ENCODE measurements at regions of chr11 and their contacts with region 1.

Region 1: GRCh38 chr11:64448599-64449556 is 89.9 kb downstream of the RPS6KA4 start:
- H3K4me3 ChIP-seq: peak overlapping the region; percentile 33
- H3K27ac ChIP-seq: no peak overlapping the region
- H3K4me1 ChIP-seq: peaks cover 3% of the 10 kb centered on the region; the same call in 1 of the 2 replicates
- CTCF ChIP-seq: peak; percentile 93

Region 2: GRCh38 chr11:63882555-63883242 is 566.2 kb before region 1 on chr11:
- CTCF ChIA-PET with region 1: no interaction called
- POLR2A ChIA-PET with region 1: no interaction called
- H3K4me3 ChIP-seq: no peak overlapping the region
- H3K27ac ChIP-seq: no peak overlapping the region
- H3K4me1 ChIP-seq: no peaks in the 10 kb centered on the region
- CTCF ChIP-seq: no peak

Region 3: DNA sequence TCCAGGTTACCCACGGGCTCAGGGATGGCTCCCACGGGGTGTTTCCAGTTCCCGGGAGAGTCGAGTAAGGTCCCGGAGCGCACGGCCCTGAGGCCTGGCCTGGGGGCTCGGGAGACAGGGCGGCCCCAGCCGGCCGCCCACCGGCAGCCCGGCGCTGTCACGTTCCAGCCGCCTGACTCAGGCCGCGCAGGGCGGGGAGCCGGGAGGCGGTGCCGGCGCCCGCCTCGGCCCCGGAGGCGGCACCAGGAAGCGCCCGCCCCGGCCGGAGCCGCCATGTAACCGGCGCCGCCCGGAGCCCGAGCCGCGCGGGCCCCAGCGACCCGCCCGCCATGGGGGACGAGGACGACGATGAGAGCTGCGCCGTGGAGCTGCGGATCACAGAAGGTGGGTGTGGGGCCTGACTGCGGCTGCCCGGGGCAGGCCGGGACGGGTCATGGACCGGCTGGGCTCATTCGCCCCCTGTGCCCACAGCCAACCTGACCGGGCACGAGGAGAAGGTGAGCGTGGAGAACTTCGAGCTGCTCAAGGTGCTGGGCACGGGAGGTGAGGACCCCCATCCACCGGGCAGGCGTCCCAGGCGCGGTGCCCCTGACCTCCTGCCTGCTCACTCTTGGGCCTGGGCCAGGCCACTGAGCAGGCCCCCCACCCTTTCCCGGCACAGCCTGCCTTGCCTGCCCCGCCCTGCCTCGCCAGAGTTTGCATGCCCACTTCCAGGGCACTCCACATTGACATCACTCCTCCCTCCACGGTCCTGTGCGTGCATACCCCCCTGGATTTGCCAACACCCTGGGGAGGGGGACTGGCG is 89.8 kb before region 1 on chr11 and contains the start of gene RPS6KA4:
- CTCF ChIA-PET with region 1: interaction called, 63 read pairs
- POLR2A ChIA-PET with region 1: interaction called, 3 read pairs
- H3K4me3 ChIP-seq: peak within 1 kb of the TSS; percentile 83
- H3K27ac ChIP-seq: peak within 1 kb of the TSS; percentile 75; the same call in 1 of the 2 replicates
- H3K4me1 ChIP-seq: no peaks in the 10 kb centered on the region; the same call in 1 of the 2 replicates
- CTCF ChIP-seq: no peak

Region 4: DNA sequence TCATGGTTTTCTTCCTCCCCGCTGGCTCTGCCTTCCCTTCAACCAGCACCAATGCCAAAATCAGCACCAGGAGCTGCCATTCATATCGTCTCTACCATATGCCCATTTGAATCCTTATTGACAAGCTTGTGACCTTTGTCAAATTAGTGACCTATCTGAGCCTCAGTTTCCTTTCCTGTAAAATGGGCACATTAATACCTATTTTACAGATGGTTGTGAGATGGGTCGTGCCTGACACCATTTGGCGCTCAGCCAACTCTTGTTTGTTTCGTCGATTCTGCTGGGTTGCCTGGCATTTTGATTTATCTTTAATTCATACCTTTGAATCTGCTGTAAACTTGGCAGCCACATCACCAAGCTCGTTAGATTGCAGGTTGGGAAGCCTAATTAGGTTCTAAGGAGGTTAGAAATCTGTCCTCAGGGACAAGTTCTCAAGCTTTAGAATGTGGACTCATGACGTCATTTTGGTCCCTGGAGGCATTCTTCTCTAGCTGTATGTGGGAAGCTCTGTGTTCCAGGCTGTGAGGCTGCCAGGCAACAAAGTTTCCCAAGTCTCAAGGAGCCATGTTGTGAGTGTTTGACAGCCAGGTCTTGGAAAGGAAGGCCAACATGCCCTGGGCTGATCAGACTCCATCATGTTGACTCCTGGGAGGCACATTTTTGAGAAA is 28.9 kb before region 1 on chr11:
- CTCF ChIA-PET with region 1: interaction called, 13 read pairs
- POLR2A ChIA-PET with region 1: no interaction called
- H3K4me3 ChIP-seq: no peak overlapping the region
- H3K27ac ChIP-seq: no peak overlapping the region
- H3K4me1 ChIP-seq: no peaks in the 10 kb centered on the region
- CTCF ChIP-seq: no peak

Region 5: DNA sequence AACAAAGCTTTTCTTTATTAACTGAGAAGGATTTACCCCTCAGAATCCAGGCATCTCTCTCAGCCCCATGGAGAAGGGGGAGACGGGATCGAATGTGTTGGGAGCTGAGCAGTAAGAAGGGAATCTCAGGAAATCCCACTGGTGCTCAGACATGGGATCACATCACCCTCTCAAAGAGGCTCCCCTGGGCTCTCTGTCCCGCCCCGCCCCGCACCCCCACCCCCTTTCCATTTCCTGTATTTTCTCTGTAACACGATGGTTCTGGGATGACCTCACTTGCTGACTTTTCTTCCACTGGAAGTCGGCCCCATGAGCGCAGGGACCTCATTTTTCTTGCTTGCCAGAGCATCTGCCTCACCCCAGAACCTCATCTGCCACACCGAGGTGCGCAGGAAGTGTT is 10.1 kb after region 1 on chr11:
- CTCF ChIA-PET with region 1: interaction called, 25 read pairs
- POLR2A ChIA-PET with region 1: no interaction called
- H3K4me3 ChIP-seq: no peak overlapping the region
- H3K27ac ChIP-seq: no peak overlapping the region
- H3K4me1 ChIP-seq: no peaks in the 10 kb centered on the region
- CTCF ChIP-seq: no peak

Region 6: DNA sequence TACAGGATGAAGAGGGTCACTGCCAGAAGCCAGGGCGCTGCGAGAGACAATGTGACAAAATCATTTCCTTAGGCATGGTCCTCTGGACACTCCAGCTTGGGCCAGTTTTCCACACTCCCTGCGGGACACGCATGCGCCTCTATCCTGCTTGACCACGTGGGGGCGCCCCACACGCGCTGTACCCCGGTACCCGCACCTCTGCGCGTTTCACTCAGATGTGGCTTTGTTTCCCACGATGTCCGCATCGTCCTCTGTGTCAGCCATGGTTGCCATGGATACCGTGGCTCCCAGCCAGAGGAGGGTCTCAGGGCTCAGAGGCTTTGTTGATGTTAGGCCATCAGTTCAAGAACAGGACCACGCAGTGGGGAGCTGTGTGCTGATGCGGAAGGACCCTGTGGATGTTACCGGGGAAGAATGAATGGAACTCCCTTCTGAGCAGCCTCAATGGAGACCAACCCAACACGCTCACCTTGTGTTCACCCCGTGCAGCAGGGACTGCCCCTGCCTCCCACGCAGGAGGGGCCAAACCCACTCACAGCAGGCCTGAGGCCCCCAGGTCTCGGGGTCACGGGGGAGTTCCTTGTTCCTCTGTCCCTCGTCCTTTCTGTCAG is 41.1 kb after region 1 on chr11:
- CTCF ChIA-PET with region 1: interaction called, 18 read pairs
- POLR2A ChIA-PET with region 1: no interaction called
- H3K4me3 ChIP-seq: no peak overlapping the region
- H3K27ac ChIP-seq: no peak overlapping the region
- H3K4me1 ChIP-seq: no peaks in the 10 kb centered on the region
- CTCF ChIP-seq: peak; percentile 56

Region 7: DNA sequence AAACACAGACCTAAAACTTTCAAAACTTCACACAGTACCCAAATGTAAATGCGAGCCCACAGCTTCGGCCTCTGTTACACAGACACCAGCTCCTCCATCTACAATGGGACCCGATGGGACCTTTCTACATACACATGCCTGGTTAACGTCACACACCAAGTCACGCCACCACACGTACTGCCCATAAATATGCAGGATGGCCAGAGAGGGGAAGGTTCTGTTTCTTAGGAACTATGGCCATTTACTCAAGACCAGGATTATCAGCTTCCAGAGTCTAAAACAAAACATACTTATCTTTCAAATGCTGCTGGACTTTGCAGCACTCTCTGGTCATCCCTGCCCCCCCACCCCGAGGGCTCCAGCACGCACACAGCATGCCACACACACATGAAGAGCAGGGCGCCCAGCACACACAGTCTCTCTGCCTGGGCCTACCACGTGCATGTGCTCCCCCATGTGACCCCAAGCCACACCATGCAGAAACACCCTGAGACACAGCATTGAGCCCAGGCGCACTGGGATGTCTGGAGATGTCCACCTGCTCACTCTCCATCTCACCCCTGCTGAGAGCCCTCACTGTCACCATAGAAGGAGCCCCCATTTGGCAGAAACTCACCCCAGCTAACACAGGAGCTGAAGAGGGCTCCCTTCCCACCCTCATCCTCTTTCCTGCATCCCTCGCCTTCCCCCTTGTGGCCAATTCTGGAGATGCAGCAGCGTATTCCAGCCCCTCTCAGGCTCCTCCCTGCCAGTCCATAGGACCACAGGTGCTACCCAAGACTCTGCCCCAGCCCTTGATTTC is 203.9 kb after region 1 on chr11:
- CTCF ChIA-PET with region 1: interaction called, 81 read pairs
- POLR2A ChIA-PET with region 1: interaction called, 4 read pairs
- H3K4me3 ChIP-seq: no peak overlapping the region
- H3K27ac ChIP-seq: no peak overlapping the region
- H3K4me1 ChIP-seq: no peaks in the 10 kb centered on the region
- CTCF ChIP-seq: peak; percentile 81

Region 8: DNA sequence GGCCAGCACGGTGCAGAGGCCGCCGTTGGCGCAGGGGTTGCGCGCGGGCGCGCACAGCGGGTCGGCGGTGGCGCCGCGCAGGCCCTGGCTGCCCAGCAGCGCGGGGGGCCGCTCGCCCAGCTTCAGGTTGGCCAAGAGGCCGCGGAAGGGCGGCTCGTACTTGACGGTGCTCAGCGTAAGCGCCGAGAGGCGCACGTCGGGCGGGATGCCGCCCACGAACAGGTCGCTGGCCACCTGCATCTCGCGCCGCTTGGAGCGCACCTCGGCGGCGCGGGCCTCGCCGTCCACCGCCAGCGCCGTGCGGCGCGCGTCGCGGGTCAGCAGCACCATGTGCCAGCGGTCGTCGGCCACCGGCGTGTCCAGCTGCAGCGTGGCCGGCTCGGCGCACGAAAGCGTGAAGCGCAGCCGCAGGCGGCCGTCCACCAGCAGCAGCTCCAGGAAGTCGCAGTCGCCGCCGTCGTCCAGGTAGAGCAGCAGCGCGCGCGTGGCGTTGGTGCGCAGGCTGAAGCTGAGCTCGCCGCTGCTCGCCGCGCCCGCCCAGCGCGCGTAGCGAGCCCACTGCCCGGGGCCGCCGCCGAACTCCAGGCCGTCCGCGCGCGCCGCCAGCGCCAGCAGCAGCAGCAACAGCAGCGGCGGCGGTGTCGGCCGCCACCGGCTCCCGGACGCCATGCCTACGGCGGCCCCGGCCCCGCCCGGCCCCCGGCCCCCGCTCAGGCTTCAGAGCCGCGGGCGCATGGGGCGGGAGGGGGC is 264.3 kb after region 1 on chr11:
- CTCF ChIA-PET with region 1: no interaction called
- POLR2A ChIA-PET with region 1: no interaction called
- H3K4me3 ChIP-seq: no peak overlapping the region
- H3K27ac ChIP-seq: no peak overlapping the region
- H3K4me1 ChIP-seq: no peaks in the 10 kb centered on the region
- CTCF ChIP-seq: no peak